Naive thymus-derived CD4-positive, alpha-beta T cell (primary cell): ENCODE measurements at regions of chr16 and their contacts with region 1.

Region 1: GRCh38 chr16:25051406-25052150 is 36.4 kb upstream of the ARHGAP17 start:
- DNase-seq: peak in 1 of 9 donors; percentile 21
- ATAC-seq: no peak
- H3K4me3 ChIP-seq: peak overlapping the region; percentile 25
- H3K4me3 Mint-ChIP-seq: peak overlapping the region; percentile 45 to 85 (median 70)
- H3K27ac ChIP-seq: peak overlapping the region; percentile 39
- H3K27ac Mint-ChIP-seq: peak overlapping the region; percentile 43 to 99 (median 96)
- H3K4me1 ChIP-seq: peaks cover 23 to 36% of the 10 kb centered on the region in 2 donors
- H3K4me1 Mint-ChIP-seq: peaks cover 30 to 60% (median 54%) of the 10 kb centered on the region in 7 donors
- H3K27me3 ChIP-seq: no peaks in the 10 kb centered on the region
- H3K27me3 Mint-ChIP-seq: no peaks in the 10 kb centered on the region

Region 2: GRCh38 chr16:25031441-25032307 is 19.9 kb before region 1 on chr16:
- CTCF ChIA-PET with region 1: interaction called, 14 read pairs
- POLR2A ChIA-PET with region 1: interaction called, 66 read pairs
- intact Hi-C with region 1: loop called (anchors 1 kb)
- DNase-seq: peak; percentile 70 to 95 (median 93)
- ATAC-seq: peak; percentile 100
- H3K4me3 ChIP-seq: peak overlapping the region; percentile 86
- H3K4me3 Mint-ChIP-seq: peak overlapping the region; percentile 84 to 99 (median 96)
- H3K27ac ChIP-seq: peak overlapping the region; percentile 76
- H3K27ac Mint-ChIP-seq: peak overlapping the region; percentile 81 to 98 (median 95)
- H3K4me1 ChIP-seq: peaks cover 13 to 20% of the 10 kb centered on the region in 2 donors
- H3K4me1 Mint-ChIP-seq: peaks cover 24 to 59% (median 36%) of the 10 kb centered on the region in 7 donors
- H3K27me3 ChIP-seq: no peaks in the 10 kb centered on the region
- H3K27me3 Mint-ChIP-seq: no peaks in the 10 kb centered on the region

Region 3: GRCh38 chr16:25066747-25067631 is 15.4 kb after region 1 on chr16:
- CTCF ChIA-PET with region 1: interaction called, 3 read pairs
- POLR2A ChIA-PET with region 1: interaction called, 87 read pairs
- intact Hi-C with region 1: loop called (anchors 1 to 2 kb)
- DNase-seq: peak; percentile 66 to 86 (median 76)
- ATAC-seq: peak; percentile 98
- H3K4me3 ChIP-seq: peak overlapping the region; percentile 85
- H3K4me3 Mint-ChIP-seq: peak overlapping the region; percentile 82 to 99 (median 92)
- H3K27ac ChIP-seq: peak overlapping the region; percentile 76
- H3K27ac Mint-ChIP-seq: peak overlapping the region; percentile 85 to 100 (median 93)
- H3K4me1 ChIP-seq: peaks cover 17 to 33% of the 10 kb centered on the region in 2 donors
- H3K4me1 Mint-ChIP-seq: peaks cover 30 to 72% (median 52%) of the 10 kb centered on the region in 7 donors
- H3K27me3 ChIP-seq: no peaks in the 10 kb centered on the region
- H3K27me3 Mint-ChIP-seq: peaks cover 0 to 2% (median 0%) of the 10 kb centered on the region in 5 donors

Region 4: DNA sequence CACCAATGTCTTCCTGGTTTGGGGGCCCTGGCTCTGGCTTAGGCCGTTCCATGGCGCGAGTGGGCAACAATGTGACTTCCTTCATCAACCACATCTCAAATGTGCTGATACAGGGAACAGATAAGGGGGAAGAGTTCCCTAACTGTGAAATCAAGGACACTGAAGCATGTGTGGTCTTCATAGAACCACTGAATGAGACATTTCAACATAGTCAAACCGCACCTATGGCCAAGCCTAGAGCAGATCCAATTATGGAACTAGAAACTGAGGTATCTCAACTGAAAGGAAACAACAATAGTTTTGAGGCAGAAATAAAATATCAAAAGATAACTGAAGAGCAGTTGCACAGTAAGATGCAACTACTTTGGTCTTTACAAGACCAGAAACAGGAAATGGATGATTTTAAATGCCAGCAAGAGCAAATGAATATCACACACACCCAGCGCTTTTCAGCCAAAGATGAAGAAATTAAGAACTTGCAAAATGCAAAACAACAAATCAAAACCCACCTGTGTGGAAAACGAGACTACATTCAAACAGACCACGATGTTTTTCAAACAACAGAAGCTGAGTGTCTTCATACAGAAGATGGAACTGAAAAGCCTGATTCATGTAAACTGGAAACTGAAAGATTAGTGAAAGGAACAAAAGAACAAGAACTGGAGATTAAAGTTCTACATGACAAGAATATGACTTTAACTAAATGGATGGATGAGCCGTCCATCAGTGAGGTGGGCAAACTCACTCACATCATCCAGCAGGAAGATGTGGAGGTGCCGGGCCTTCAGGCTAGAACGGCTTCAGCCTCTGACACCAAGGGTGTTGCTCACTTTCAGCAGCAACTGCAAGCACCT is 41.9 kb after region 1 on chr16:
- CTCF ChIA-PET with region 1: interaction called, 3 read pairs
- POLR2A ChIA-PET with region 1: interaction called, 13 read pairs
- intact Hi-C with region 1: no loop called
- DNase-seq: peak in 5 of 9 donors; percentile 15 to 49 (median 37)
- ATAC-seq: peak; percentile 68
- H3K4me3 ChIP-seq: no peak overlapping the region
- H3K4me3 Mint-ChIP-seq: peak overlapping the region; percentile 1 to 83 (median 62)
- H3K27ac ChIP-seq: peak overlapping the region; percentile 69
- H3K27ac Mint-ChIP-seq: peak overlapping the region; percentile 82 to 98 (median 92)
- H3K4me1 ChIP-seq: peaks cover 0 to 20% of the 10 kb centered on the region in 2 donors
- H3K4me1 Mint-ChIP-seq: peaks cover 21 to 44% (median 39%) of the 10 kb centered on the region in 7 donors
- H3K27me3 ChIP-seq: no peaks in the 10 kb centered on the region
- H3K27me3 Mint-ChIP-seq: no peaks in the 10 kb centered on the region

Region 5: DNA sequence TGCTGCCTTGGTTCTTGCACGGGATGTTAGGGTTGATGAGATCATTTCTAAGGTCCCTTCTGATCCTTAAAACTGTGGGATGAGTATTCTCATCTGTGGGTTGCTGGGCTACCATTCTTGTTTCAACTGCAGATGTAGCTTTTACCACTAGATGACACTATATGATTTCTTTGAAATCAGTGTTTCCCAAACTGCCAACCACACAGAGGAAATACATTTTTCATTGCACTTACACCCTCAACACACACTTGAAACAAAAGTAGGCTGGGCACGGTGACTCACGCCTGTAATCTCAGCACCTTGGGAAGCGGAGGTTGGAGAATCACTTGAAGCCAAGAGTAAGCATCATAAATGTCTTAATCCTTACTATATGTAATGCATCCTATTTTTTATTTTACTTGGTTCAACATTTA is 75.2 kb after region 1 on chr16:
- CTCF ChIA-PET with region 1: no interaction called
- POLR2A ChIA-PET with region 1: no interaction called
- intact Hi-C with region 1: loop called (anchors 1 kb)
- DNase-seq: peak in 6 of 9 donors; percentile 13 to 55 (median 34)
- ATAC-seq: peak; percentile 75
- H3K4me3 ChIP-seq: no peak overlapping the region
- H3K4me3 Mint-ChIP-seq: peak overlapping the region in 3 of 10 donors; percentile 34 to 62 (median 57)
- H3K27ac ChIP-seq: no peak overlapping the region
- H3K27ac Mint-ChIP-seq: peak overlapping the region; percentile 2 to 77 (median 44)
- H3K4me1 ChIP-seq: no peaks in the 10 kb centered on the region
- H3K4me1 Mint-ChIP-seq: peaks cover 14 to 50% (median 43%) of the 10 kb centered on the region in 7 donors
- H3K27me3 ChIP-seq: no peaks in the 10 kb centered on the region
- H3K27me3 Mint-ChIP-seq: no peaks in the 10 kb centered on the region

Region 6: GRCh38 chr16:25177831-25178688 is 126.5 kb after region 1 on chr16:
- CTCF ChIA-PET with region 1: no interaction called
- POLR2A ChIA-PET with region 1: no interaction called
- intact Hi-C with region 1: loop called in 1 of 2 experiments (anchors 1 kb)
- DNase-seq: no peak
- ATAC-seq: no peak
- H3K4me3 ChIP-seq: no peak overlapping the region
- H3K4me3 Mint-ChIP-seq: no peak overlapping the region
- H3K27ac ChIP-seq: no peak overlapping the region
- H3K27ac Mint-ChIP-seq: peak overlapping the region in 2 of 9 donors; percentile 4 to 57
- H3K4me1 ChIP-seq: no peaks in the 10 kb centered on the region
- H3K4me1 Mint-ChIP-seq: peaks cover 0 to 10% (median 0%) of the 10 kb centered on the region in 7 donors
- H3K27me3 ChIP-seq: no peaks in the 10 kb centered on the region
- H3K27me3 Mint-ChIP-seq: no peaks in the 10 kb centered on the region

Region 7: DNA sequence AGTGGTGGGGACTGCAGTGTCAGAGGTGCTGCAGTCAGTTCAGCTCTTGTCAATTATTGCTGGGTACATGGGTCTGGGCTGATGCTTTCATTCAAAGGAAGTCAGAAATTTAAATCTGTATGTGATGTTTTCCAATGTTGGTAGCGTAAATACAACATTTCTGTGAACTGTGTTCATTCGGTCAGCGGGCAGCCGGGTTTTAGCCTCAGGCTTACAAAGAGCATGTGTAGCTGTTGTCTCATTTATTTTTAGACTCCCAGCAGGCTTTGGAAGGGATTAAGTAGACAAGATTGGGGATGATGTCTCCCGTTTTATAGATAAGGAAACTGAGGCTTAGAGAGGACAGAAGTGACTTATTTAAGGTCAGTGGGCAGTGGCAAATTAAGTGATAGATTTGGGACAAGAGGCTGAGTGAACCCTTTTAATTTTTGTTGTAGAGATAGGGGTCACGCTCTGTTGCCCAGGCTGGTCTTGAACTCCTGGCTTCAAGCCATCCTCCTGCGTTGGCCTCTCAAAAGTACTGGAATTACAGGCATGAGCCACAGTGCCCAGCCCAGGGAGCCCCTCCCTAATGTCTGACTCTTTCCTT is 173.2 kb after region 1 on chr16:
- CTCF ChIA-PET with region 1: interaction called, 15 read pairs
- POLR2A ChIA-PET with region 1: no interaction called
- intact Hi-C with region 1: loop called (anchors 1 kb)
- DNase-seq: no peak
- ATAC-seq: no peak
- H3K4me3 ChIP-seq: no peak overlapping the region
- H3K4me3 Mint-ChIP-seq: no peak overlapping the region
- H3K27ac ChIP-seq: no peak overlapping the region
- H3K27ac Mint-ChIP-seq: no peak overlapping the region
- H3K4me1 ChIP-seq: no peaks in the 10 kb centered on the region
- H3K4me1 Mint-ChIP-seq: peaks cover 0 to 6% (median 0%) of the 10 kb centered on the region in 7 donors
- H3K27me3 ChIP-seq: no peaks in the 10 kb centered on the region
- H3K27me3 Mint-ChIP-seq: no peaks in the 10 kb centered on the region